ENCODE measurements at regions of chr5 and their contacts with region 1.

Region 1: DNA sequence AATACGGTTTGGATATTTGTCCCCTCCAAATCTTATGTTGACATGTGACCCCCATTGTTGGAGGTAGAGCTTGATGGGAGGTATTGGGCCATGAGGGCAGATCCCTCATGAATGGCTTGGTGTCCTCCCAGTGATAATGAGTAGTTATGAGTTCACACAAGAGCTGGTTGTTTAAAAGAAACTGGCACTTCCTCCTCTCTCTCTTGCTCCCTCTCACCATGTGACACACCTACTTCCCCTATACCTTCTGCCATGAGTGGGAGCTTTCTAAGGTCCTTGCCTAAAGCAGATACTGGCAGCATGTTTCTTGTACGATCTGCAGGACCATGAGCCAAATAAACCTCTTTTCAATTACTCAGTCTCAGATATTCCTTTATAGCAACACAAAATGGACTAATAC is 132.0 kb downstream of the PIK3R1 start:
- DNase-seq: no peak
- CTCF ChIP-seq: no peak

Region 2: GRCh38 chr5:68331192-68332079 is 16.1 kb before region 1 on chr5:
- CTCF ChIA-PET with region 1: interaction called, 12 read pairs
- POLR2A ChIA-PET with region 1: no interaction called
- DNase-seq: peak; percentile 28
- CTCF ChIP-seq: no peak

Measured in GM10248 (cell line).